ENCODE measurements at regions of chr2 and their contacts with region 1.

Region 1: DNA sequence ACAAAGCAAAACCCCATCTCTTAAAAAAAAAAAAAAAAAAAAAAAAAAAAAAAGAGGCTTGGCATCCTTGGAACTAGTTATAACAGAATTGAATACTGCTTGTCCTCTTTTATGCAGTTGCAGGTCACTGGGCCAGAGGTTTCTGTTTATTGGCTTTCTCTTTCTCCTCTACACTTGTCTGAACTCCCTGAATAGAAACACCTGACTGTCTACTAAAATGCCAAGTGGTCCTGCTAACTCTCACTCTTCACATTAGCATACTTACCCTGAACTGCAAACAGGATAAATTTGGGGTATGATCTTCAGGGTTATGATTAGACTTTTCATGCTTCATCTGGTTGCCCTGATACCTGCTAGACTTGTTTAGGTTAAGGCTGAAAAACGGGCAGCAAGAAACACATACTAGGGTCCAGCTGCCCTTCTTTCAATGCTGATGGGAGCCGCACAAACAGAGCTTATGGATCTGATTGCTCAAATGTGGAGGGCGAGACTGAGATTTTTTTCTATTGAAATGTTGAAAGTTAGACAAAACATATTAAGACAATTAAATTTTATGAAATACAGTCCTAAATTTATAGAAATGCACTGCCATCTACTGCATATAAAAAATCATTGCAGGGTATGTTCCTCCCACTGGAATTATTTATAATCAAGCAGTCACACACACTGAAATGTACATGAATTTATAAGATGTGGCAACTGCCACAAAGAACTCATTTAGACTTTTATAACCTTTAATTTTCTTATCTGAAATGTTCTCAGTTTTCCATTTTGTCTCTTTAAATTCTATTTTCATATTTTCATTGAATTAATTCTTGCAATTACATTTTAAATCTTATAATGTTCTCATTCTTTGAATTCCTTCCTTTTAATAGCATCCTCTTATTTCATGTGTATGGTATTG is 40.8 kb downstream of the GTF3C3 start:
- DNase-seq: no peak
- ATAC-seq: no peak
- H3K4me3 ChIP-seq: no peak overlapping the region
- H3K27ac ChIP-seq: no peak overlapping the region
- H3K4me1 ChIP-seq: no peaks in the 10 kb centered on the region
- H3K27me3 ChIP-seq: no peaks in the 10 kb centered on the region
- CTCF ChIP-seq: peak in 1 of 3 experiments; percentile 31; a peak in 2 of 6 replicates
- EP300 ChIP-seq: no peak
- POLR2A ChIP-seq: no peak
- RAD21 ChIP-seq: 0 out of 4 replicates have a peak, but pooled peaks of 1 of the 2 experiments have one; percentile 7

Region 2: GRCh38 chr2:196291873-196292800 is 466.6 kb before region 1 on chr2:
- CTCF ChIA-PET with region 1: no interaction called
- POLR2A ChIA-PET with region 1: no interaction called
- in situ Hi-C with region 1: no loop called
- intact Hi-C with region 1: loop called (anchors 5 kb)
- DNase-seq: no peak
- ATAC-seq: no peak
- H3K4me3 ChIP-seq: no peak overlapping the region
- H3K27ac ChIP-seq: no peak overlapping the region
- H3K4me1 ChIP-seq: no peaks in the 10 kb centered on the region
- H3K27me3 ChIP-seq: no peaks in the 10 kb centered on the region
- CTCF ChIP-seq: no peak
- EP300 ChIP-seq: no peak
- POLR2A ChIP-seq: no peak
- RAD21 ChIP-seq: no peak

Measured in K562 (cell line).